Activated CD8-positive, alpha-beta T cell treated with anti-CD3 and anti-CD28 coated beads, Interleukin-2, amount 10 ng/mL, durations not matched to agents 7 days and 5 days (primary cell): ENCODE measurements at regions of chr1 and their contacts with region 1.

Region 1: DNA sequence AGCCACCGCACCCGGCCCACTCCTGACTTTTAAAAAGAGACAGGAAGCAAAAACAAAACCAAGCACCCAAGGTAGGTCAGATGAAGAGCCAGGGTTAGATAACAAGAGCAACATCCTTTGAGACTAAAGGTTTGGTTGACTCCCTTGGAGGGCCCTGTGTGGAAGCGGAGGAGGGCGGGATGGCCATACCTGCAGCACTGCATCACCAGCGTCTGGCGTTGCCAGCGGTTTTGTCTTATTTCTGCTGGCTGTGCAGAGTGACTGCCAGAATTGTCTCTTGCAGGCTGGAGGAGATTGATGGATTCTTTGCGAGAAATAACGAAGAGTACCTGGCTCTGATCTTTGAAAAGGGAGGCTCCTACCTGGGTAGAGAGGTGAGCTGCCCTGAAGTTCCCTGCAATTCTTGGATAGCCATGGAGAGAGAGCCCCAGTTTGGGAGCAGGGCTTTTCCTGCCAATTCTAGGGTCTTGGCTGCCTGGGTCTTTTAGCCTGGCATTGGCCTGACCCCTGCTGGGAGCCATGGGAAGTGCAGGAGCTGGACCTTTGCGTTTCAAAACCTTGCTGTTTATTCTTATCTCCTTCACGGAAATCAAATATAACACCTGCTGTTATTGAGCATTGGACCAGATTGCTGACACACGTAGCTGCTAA is 24.0 kb downstream of the QSOX1 start:
- DNase-seq: peak; percentile 71
- ATAC-seq: peak; percentile 54
- H3K4me3 Mint-ChIP-seq: no peak overlapping the region
- H3K27ac Mint-ChIP-seq: no peak overlapping the region
- H3K4me1 Mint-ChIP-seq: no peaks in the 10 kb centered on the region
- H3K27me3 Mint-ChIP-seq: no peaks in the 10 kb centered on the region

Region 2: GRCh38 chr1:179706339-179706941 is 472.2 kb before region 1 on chr1:
- CTCF ChIA-PET with region 1: interaction called, 30 read pairs
- POLR2A ChIA-PET with region 1: no interaction called
- DNase-seq: peak; percentile 71
- ATAC-seq: no peak
- H3K4me3 Mint-ChIP-seq: no peak overlapping the region
- H3K27ac Mint-ChIP-seq: no peak overlapping the region
- H3K4me1 Mint-ChIP-seq: peaks cover 6% of the 10 kb centered on the region
- H3K27me3 Mint-ChIP-seq: peaks cover 4% of the 10 kb centered on the region

Region 3: DNA sequence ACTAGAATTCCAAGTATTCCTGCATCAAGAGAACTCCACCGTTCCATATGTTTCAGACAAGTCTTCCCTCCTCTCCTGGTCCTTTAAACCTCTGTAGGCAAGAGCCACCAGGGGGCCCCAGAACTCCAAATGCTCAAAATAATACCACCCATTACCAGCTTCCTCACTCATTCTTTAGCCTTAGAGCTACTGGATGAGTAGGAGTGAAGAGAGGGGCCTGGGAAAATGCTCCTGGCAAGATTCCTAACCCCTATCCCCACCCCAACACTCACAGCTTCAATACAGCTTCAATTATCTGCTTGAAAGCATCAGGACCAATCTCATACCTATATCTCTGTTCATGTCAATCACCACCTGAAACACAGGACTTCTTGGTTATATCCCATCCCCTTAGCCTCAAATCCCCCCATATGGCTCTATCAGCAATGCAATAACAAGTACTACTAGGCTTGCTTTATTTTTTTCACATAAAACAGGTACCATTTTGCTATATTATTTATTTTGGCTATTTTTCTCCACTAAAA is 310.8 kb before region 1 on chr1:
- CTCF ChIA-PET with region 1: interaction called, 66 read pairs
- POLR2A ChIA-PET with region 1: no interaction called
- DNase-seq: peak; percentile 65
- ATAC-seq: peak; percentile 87
- H3K4me3 Mint-ChIP-seq: no peak overlapping the region
- H3K27ac Mint-ChIP-seq: peak overlapping the region; percentile 16
- H3K4me1 Mint-ChIP-seq: peaks cover 8% of the 10 kb centered on the region
- H3K27me3 Mint-ChIP-seq: no peaks in the 10 kb centered on the region

Region 4: GRCh38 chr1:179876289-179876715 is 302.3 kb before region 1 on chr1:
- CTCF ChIA-PET with region 1: interaction called, 12 read pairs
- POLR2A ChIA-PET with region 1: no interaction called
- DNase-seq: no peak
- ATAC-seq: no peak
- H3K4me3 Mint-ChIP-seq: peak overlapping the region; percentile 86
- H3K27ac Mint-ChIP-seq: peak overlapping the region; percentile 52
- H3K4me1 Mint-ChIP-seq: peaks cover 47% of the 10 kb centered on the region
- H3K27me3 Mint-ChIP-seq: no peaks in the 10 kb centered on the region

Region 5: DNA sequence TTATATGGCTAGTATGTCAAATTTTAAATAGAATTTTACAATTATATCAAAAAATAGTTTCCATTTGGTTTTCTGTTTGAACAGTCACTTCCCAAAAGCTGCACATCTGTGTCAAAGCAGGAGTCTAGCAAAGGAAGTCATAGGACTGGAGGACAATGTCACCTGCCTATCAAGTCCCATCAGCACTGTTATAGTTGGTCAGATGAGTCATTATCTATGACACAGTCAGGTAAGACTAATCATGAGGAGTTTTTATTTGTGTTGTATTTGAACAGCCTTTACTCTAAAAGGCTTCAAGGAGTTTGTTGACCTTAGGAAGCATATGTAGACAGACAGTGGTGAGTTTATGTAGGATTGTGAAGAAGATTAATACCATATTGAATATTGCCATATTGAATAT is 98.2 kb before region 1 on chr1:
- CTCF ChIA-PET with region 1: interaction called, 11 read pairs
- POLR2A ChIA-PET with region 1: no interaction called
- DNase-seq: no peak
- ATAC-seq: no peak
- H3K4me3 Mint-ChIP-seq: no peak overlapping the region
- H3K27ac Mint-ChIP-seq: no peak overlapping the region
- H3K4me1 Mint-ChIP-seq: no peaks in the 10 kb centered on the region
- H3K27me3 Mint-ChIP-seq: no peaks in the 10 kb centered on the region

Region 6: DNA sequence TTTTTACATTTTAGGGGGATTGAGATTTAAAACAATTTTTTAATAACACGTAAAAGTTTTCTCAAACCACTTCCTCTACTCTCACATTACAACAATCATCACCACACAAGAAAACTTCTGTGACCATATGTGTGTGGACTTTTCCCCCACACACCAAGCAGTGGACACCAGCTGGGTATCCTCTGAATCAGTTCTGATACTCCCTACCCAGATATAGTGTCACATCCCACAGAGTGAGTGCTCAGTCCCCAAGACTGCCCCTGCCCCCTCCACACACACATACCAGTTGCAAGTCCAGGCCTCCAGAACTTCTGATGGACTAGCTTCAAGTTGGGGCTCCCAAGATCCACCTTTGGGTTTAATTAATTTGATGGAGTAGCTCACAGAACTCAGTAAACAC is 77.2 kb before region 1 on chr1:
- CTCF ChIA-PET with region 1: interaction called, 26 read pairs
- POLR2A ChIA-PET with region 1: no interaction called
- DNase-seq: no peak
- ATAC-seq: no peak
- H3K4me3 Mint-ChIP-seq: no peak overlapping the region
- H3K27ac Mint-ChIP-seq: no peak overlapping the region
- H3K4me1 Mint-ChIP-seq: peaks cover 16% of the 10 kb centered on the region
- H3K27me3 Mint-ChIP-seq: no peaks in the 10 kb centered on the region